Endothelial cell of umbilical vein (primary cell): ENCODE measurements at regions of chr2 and their contacts with region 1.

Region 1: GRCh38 chr2:146734042-146734820 is 1110.6 kb upstream of the ACVR2A start:
- DNase-seq: peak; percentile 71
- H3K4me3 ChIP-seq: no peak overlapping the region
- H3K27ac ChIP-seq: no peak overlapping the region
- H3K4me1 ChIP-seq: no peaks in the 10 kb centered on the region
- H3K27me3 ChIP-seq: no peaks in the 10 kb centered on the region
- CTCF ChIP-seq: peak; percentile 31 to 43
- POLR2A ChIP-seq: no peak

Region 2: DNA sequence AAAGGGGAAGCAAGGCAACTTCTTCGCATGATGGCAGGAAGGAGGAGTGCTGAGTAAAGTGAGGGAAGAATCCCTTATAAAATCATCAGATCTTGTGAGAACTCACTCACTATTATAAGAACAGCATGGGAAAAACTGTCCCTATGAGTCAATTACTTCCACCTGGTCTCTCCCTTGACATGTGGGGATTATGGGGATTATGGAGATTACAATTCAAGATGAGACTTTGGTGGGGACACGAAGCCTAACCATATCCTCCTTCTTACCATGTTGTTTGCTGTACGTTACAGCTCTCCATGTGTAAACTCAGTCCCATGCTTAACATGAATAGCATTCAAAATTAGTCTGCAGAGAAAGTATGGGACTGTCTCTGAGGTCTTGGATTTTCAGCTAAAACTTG is 13.8 kb after region 1 on chr2:
- CTCF ChIA-PET with region 1: interaction called, 10 read pairs
- POLR2A ChIA-PET with region 1: no interaction called
- dilution Hi-C with region 1: no loop called
- intact Hi-C with region 1: no loop called
- DNase-seq: no peak
- H3K4me3 ChIP-seq: no peak overlapping the region
- H3K27ac ChIP-seq: no peak overlapping the region
- H3K4me1 ChIP-seq: no peaks in the 10 kb centered on the region
- H3K27me3 ChIP-seq: no peaks in the 10 kb centered on the region
- CTCF ChIP-seq: no peak
- POLR2A ChIP-seq: no peak

Region 3: GRCh38 chr2:146927080-146927711 is 193.0 kb after region 1 on chr2:
- CTCF ChIA-PET with region 1: interaction called, 20 read pairs
- POLR2A ChIA-PET with region 1: no interaction called
- dilution Hi-C with region 1: no loop called
- intact Hi-C with region 1: loop called (anchors 1 kb)
- DNase-seq: peak; percentile 59
- H3K4me3 ChIP-seq: no peak overlapping the region
- H3K27ac ChIP-seq: no peak overlapping the region
- H3K4me1 ChIP-seq: no peaks in the 10 kb centered on the region
- H3K27me3 ChIP-seq: no peaks in the 10 kb centered on the region
- CTCF ChIP-seq: peak; percentile 32 to 62
- POLR2A ChIP-seq: no peak

Region 4: DNA sequence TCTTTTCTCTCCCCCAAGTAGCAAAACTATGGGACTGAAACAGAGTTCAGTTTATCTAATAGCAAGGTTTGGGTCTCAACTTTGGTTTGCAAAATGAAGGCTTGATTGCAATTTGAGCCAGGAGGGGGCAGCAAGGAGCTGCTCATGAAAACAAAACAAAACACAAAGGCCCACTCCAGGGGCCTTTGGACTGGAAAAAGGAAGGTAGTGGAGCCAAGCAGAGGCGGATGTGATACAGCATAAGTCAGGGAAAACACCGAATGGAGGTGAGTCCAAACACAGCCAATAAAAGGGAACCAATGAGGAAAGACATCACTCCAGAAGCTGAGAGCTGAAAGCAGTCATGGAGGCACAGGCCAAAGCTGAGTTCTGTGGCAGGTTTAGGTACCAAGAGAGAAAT is 310.9 kb after region 1 on chr2:
- CTCF ChIA-PET with region 1: interaction called, 22 read pairs
- POLR2A ChIA-PET with region 1: no interaction called
- dilution Hi-C with region 1: no loop called
- intact Hi-C with region 1: loop called (anchors 1 kb)
- DNase-seq: peak; percentile 47
- H3K4me3 ChIP-seq: no peak overlapping the region
- H3K27ac ChIP-seq: no peak overlapping the region
- H3K4me1 ChIP-seq: no peaks in the 10 kb centered on the region
- H3K27me3 ChIP-seq: no peaks in the 10 kb centered on the region
- CTCF ChIP-seq: peak; percentile 62 to 69
- POLR2A ChIP-seq: no peak

Region 5: GRCh38 chr2:147082850-147083522 is 348.8 kb after region 1 on chr2:
- CTCF ChIA-PET with region 1: interaction called, 25 read pairs
- POLR2A ChIA-PET with region 1: no interaction called
- dilution Hi-C with region 1: no loop called
- intact Hi-C with region 1: loop called (anchors 2 kb)
- DNase-seq: peak; percentile 73
- H3K4me3 ChIP-seq: no peak overlapping the region
- H3K27ac ChIP-seq: no peak overlapping the region
- H3K4me1 ChIP-seq: no peaks in the 10 kb centered on the region
- H3K27me3 ChIP-seq: no peaks in the 10 kb centered on the region
- CTCF ChIP-seq: peak; percentile 69
- POLR2A ChIP-seq: no peak

Region 6: DNA sequence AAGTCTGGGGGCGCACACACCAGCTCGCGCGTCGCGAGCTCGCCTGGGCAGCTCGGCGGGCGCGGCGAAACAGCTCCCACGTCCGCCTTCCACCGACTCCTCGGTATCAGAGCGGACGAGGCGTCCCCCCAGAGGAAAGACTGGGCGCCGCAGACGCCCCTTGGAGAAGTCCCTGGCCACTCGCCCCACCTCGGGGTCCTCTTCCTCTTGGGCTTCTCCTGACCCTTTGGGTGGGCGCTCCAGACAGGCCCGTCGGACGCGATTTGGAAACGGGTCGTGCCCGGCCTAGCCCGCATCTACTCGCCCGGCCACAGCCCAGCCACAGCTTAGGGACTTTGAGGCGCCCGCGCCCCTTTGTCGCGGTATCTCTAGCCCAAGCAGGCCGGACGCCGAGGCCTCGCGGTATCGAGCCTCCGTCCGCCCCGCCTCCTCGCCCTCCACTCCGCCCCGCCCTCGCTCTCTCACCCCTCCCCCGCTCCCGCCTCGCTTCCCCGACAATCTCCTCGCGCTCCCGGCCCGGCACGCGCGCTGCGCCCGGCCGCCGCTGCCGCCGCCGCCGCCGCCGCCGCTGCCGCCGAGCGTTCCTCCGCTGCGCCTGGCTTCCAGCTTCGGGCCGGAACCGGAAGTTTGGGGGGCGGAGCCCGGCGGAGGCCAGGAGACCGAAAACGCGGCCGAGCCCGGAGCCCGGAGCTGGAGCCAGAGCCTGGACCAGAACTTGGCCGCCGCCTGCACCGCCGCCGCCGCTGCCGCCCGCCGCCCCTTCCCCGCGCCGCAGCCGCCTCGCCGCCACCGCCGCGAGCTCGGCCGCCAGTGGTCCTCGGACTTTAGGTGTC is 1109.8 kb after region 1 on chr2:
- CTCF ChIA-PET with region 1: interaction called, 6 read pairs
- POLR2A ChIA-PET with region 1: no interaction called
- dilution Hi-C with region 1: no loop called
- intact Hi-C with region 1: loop called (anchors 5 kb)
- DNase-seq: peak; percentile 85
- H3K4me3 ChIP-seq: peak overlapping the region; percentile 60 to 95 (median 85)
- H3K27ac ChIP-seq: peak overlapping the region; percentile 70
- H3K4me1 ChIP-seq: peaks cover 20% of the 10 kb centered on the region
- H3K27me3 ChIP-seq: peaks cover 0 to 2% of the 10 kb centered on the region in 2 experiments
- CTCF ChIP-seq: peak in 1 of 2 donors; percentile 23
- POLR2A ChIP-seq: no peak

Region 7: GRCh38 chr2:147904044-147904443 is 1169.8 kb after region 1 on chr2:
- CTCF ChIA-PET with region 1: interaction called, 149 read pairs
- POLR2A ChIA-PET with region 1: no interaction called
- dilution Hi-C with region 1: no loop called
- intact Hi-C with region 1: no loop called
- DNase-seq: no peak
- H3K4me3 ChIP-seq: no peak overlapping the region
- H3K27ac ChIP-seq: no peak overlapping the region
- H3K4me1 ChIP-seq: peaks cover 5% of the 10 kb centered on the region
- H3K27me3 ChIP-seq: no peaks in the 10 kb centered on the region
- CTCF ChIP-seq: no peak
- POLR2A ChIP-seq: no peak